Activated CD8-positive, alpha-beta T cell treated with anti-CD3 and anti-CD28 coated beads for 36 hours (primary cell): ENCODE measurements at regions of chr21 and their contacts with region 1.

Region 1: GRCh38 chr21:15483138-15483780 is 246.5 kb upstream of the USP25 start:
- DNase-seq: peak; percentile 89
- ATAC-seq: peak; percentile 95
- H3K4me3 Mint-ChIP-seq: no peak overlapping the region
- H3K27ac Mint-ChIP-seq: no peak overlapping the region
- H3K4me1 Mint-ChIP-seq: peaks cover 19% of the 10 kb centered on the region
- H3K27me3 Mint-ChIP-seq: no peaks in the 10 kb centered on the region
- CTCF ChIP-seq: peak; percentile 85

Region 2: GRCh38 chr21:14864211-14865021 is 618.8 kb before region 1 on chr21:
- CTCF ChIA-PET with region 1: interaction called, 11 read pairs
- POLR2A ChIA-PET with region 1: no interaction called
- intact Hi-C with region 1: loop called (anchors 5 kb)
- DNase-seq: peak; percentile 72
- ATAC-seq: peak; percentile 82
- H3K4me3 Mint-ChIP-seq: no peak overlapping the region
- H3K27ac Mint-ChIP-seq: no peak overlapping the region
- H3K4me1 Mint-ChIP-seq: peaks cover 7% of the 10 kb centered on the region
- H3K27me3 Mint-ChIP-seq: peaks cover 7% of the 10 kb centered on the region
- CTCF ChIP-seq: peak; percentile 68

Region 3: DNA sequence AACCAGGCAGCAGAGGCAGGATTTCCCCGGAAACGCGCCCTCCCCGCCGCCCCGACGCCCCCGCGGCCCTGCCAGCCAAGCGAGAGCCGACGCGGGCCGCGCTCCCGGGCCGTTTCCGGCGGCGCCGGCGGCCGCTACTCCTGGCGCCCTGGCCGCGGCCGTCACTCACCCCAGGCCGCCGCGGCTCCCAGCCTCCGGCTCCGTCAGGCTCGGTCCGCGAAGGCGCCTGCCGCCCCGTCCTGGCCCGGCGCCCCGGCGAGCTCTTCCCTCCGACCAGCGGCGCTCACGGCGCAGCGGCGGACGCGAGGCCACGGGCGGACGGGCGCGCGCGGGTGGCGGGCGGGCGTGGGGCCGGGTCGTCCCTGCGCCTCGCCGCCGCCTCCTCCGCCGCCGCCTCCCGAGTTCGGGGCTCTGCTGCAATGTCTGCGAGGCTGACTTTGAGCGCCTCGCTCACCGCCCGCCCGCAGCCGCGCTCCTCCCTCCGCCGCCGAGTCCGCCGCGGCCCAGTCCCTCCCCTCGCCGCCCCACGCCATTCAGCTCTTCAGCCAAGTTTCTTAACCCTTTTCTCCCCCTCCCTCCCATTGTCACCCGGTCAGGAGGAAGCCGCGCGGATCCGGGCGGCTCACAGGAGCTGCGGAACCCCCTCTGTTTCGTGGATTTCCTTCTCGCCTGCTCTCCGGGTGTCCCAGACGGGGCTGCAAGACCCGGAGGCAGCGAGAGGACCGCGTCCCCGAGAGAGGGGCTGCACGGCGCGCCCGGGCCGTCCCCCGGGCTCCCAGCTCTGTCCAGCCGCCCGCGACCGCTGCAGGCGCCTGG is 418.5 kb before region 1 on chr21 and contains the start of gene NRIP1:
- CTCF ChIA-PET with region 1: interaction called, 9 read pairs
- POLR2A ChIA-PET with region 1: interaction called, 3 read pairs
- intact Hi-C with region 1: loop called (anchors 5 kb)
- DNase-seq: peak; percentile 79
- ATAC-seq: peak; percentile 71
- H3K4me3 Mint-ChIP-seq: peak within 1 kb of the TSS; percentile 96
- H3K27ac Mint-ChIP-seq: peak within 1 kb of the TSS; percentile 98
- H3K4me1 Mint-ChIP-seq: peaks cover 40% of the 10 kb centered on the region
- H3K27me3 Mint-ChIP-seq: peaks cover 2% of the 10 kb centered on the region
- CTCF ChIP-seq: no peak
- total RNA-seq, gene NRIP1: 12.4 to 12.8 TPM

Region 4: DNA sequence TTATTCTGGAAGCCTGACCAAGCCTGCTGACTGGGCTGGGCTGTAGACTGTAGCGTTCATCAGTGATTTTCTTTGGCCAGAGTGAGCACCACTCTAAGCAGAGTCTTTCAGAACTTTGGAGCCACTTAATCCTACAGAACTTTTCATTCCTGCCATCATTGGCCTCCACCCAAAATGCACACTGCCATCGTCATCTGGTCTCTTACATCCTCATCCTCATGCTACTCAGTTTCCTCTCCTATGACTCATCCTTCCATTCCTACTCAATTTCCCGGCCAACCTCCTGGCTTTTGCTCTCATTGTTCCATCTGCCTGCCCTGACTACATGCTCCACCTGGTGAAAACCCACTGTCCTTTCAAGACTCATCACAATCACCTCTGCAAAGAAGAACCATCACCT is 12.7 kb after region 1 on chr21:
- CTCF ChIA-PET with region 1: interaction called, 10 read pairs
- POLR2A ChIA-PET with region 1: no interaction called
- intact Hi-C with region 1: no loop called
- DNase-seq: no peak
- ATAC-seq: no peak
- H3K4me3 Mint-ChIP-seq: no peak overlapping the region
- H3K27ac Mint-ChIP-seq: no peak overlapping the region
- H3K4me1 Mint-ChIP-seq: no peaks in the 10 kb centered on the region
- H3K27me3 Mint-ChIP-seq: no peaks in the 10 kb centered on the region
- CTCF ChIP-seq: no peak

Region 5: DNA sequence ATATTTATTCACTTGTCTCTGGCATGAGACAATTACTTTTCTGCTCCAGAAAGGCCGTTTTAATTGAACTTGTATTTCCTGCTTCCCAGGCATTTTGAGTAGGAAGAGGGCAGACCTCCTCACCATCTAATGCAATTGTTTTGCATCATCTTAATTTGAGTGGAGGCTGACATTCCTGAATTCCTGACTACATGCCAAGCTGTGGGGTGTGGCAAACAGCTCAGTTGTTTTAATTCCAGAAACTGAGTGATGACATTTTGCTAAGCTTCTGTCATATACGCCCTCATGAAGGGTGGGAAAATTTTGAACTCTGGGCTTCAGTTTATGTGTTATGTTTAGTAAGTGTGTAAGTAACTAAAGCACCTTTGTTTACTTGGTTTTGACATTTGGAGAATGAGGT is 121.2 kb after region 1 on chr21:
- CTCF ChIA-PET with region 1: no interaction called
- POLR2A ChIA-PET with region 1: no interaction called
- intact Hi-C with region 1: no loop called
- DNase-seq: no peak
- ATAC-seq: no peak
- H3K4me3 Mint-ChIP-seq: no peak overlapping the region
- H3K27ac Mint-ChIP-seq: no peak overlapping the region
- H3K4me1 Mint-ChIP-seq: no peaks in the 10 kb centered on the region
- H3K27me3 Mint-ChIP-seq: no peaks in the 10 kb centered on the region
- CTCF ChIP-seq: no peak